ENCODE measurements at regions of chr12 and their contacts with region 1.

Region 1: GRCh38 chr12:54398995-54399793 is 14.7 kb upstream of the ZNF385A start:
- DNase-seq: peak; percentile 72
- H3K4me3 ChIP-seq: no peak overlapping the region
- H3K27ac ChIP-seq: no peak overlapping the region
- H3K4me1 ChIP-seq: peaks cover 6% of the 10 kb centered on the region
- H3K27me3 ChIP-seq: no peaks in the 10 kb centered on the region
- CTCF ChIP-seq: peak; percentile 100

Region 2: DNA sequence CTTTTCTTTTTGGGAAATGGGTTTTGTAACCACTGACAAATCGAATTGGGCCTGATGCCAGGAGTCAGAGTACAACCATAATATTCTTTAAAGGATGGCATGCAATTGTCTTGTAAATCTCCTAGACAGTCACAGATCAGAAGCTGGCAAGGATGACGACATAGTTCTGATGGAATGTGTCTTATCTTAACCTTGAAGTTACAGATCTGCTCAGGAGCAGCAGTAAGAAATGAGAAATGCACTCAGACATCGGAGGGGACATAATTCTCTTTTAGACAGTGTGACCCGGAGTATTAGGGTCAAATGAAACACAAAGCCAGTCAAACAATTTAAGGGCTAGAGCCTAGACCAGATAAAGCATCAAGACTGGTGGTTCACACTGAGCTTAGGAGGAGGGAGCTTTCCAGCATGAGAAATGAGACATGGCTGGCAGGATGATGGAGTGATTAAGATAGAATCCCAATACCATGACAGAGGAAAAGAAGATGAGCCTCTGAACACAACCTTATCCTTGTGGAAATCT is 136.7 kb before region 1 on chr12:
- CTCF ChIA-PET with region 1: no interaction called
- dilution Hi-C with region 1: no loop called
- in situ Hi-C with region 1: no loop called
- intact Hi-C with region 1: no loop called
- DNase-seq: no peak
- H3K4me3 ChIP-seq: no peak overlapping the region
- H3K27ac ChIP-seq: no peak overlapping the region
- H3K4me1 ChIP-seq: peaks cover 36% of the 10 kb centered on the region
- H3K27me3 ChIP-seq: no peaks in the 10 kb centered on the region
- CTCF ChIP-seq: no peak

Region 3: DNA sequence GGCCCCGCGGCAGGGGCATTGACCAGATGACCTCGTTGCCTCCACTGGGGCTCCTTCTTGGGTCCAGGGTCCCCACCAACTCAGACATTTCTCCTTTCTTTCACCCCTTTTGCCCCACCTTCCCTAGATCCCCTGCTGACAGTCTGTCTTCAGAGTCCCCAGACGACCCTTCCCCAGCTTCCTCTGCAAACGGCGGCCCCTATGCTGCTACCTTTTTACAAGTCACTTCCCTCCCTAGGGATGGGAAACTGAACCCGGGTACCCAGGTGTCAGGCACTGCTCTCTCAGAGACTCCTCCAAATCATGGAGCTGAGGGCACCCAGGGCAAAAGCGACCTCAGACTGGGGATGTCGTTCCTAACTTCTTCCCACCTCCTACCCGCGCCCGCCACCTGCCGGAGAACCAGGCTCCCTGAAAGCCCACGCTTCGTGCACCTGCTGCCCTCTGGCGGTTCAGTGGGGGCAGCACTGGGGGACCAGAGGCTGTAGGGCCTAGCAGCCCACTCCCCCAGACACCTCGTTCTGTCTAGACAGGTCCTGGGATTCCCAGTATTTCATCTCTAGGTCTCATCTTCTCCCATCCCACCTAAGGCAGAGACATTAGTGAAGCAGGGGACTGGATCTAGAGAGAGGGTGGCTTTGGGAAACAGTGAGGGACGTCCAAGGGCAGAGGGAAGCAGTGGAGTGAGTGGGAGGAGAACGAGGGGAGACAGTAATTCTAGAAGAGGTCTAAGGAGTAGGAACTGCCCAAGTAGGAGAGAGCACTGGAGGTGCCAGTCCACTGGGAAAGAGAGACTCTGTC is 19.6 kb before region 1 on chr12:
- CTCF ChIA-PET with region 1: interaction called, 4 read pairs
- dilution Hi-C with region 1: no loop called
- in situ Hi-C with region 1: no loop called
- intact Hi-C with region 1: loop called (anchors 1 kb)
- DNase-seq: peak; percentile 67
- H3K4me3 ChIP-seq: no peak overlapping the region
- H3K27ac ChIP-seq: no peak overlapping the region
- H3K4me1 ChIP-seq: peaks cover 39% of the 10 kb centered on the region
- H3K27me3 ChIP-seq: no peaks in the 10 kb centered on the region
- CTCF ChIP-seq: peak; percentile 100

Region 4: DNA sequence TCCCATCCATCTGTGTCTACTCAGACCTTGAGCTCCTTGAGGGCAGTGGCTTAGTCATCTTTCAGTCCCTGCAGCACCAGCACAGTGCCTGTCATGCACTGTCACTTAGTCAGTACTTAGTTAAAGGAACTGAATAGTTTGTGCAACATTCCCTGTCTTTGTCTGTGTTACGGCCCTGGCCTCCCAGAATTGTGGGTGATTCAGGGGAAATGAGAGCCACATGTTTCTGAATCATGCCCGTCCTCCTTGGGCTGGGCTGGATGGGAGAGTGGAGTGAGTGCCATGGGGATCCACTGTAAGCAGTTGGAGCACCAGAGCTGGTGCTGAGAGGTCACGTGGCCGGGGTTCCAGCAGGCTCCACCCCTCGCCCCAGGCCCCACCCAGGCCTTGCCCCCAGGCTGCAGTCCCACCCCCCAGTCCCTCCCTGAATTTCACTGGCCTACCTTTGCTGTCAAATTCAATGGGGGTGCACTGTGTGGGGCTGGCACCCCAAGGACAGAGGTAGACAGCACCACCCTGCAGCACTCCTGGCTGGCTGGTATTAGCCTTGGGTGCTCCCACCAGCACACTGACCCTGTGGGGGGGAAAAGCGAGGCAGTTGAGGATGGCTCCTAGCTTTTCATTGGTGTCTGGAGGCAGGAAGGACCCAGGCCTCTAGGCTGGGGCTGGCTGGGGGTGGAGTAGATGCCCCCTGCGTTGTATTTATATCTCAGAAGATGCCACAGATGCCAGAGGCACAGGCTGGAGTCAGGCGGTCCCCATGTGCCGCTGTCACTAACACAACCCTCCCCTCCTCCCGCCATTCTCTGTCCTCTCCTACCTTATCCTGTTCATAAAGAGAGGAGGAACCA is 12.4 kb after region 1 on chr12:
- CTCF ChIA-PET with region 1: interaction called, 12 read pairs
- dilution Hi-C with region 1: no loop called
- in situ Hi-C with region 1: no loop called
- intact Hi-C with region 1: no loop called
- DNase-seq: peak; percentile 99
- H3K4me3 ChIP-seq: no peak overlapping the region
- H3K27ac ChIP-seq: peak overlapping the region; percentile 74
- H3K4me1 ChIP-seq: peaks cover 46% of the 10 kb centered on the region
- H3K27me3 ChIP-seq: no peaks in the 10 kb centered on the region
- CTCF ChIP-seq: no peak

Region 5: GRCh38 chr12:54419088-54419892 is 20.1 kb after region 1 on chr12 and contains the start of gene ITGA5:
- CTCF ChIA-PET with region 1: interaction called, 4 read pairs
- dilution Hi-C with region 1: no loop called
- in situ Hi-C with region 1: no loop called
- intact Hi-C with region 1: loop called (anchors 1 kb)
- DNase-seq: peak; percentile 76
- H3K4me3 ChIP-seq: peak within 1 kb of the TSS; percentile 74 to 87 (median 82)
- H3K27ac ChIP-seq: peak within 1 kb of the TSS; percentile 66
- H3K4me1 ChIP-seq: peaks cover 56% of the 10 kb centered on the region
- H3K27me3 ChIP-seq: no peaks in the 10 kb centered on the region
- CTCF ChIP-seq: no peak
- total RNA-seq, gene ITGA5: 74.2 to 128 TPM

Region 6: GRCh38 chr12:54439521-54440255 is 40.5 kb after region 1 on chr12:
- CTCF ChIA-PET with region 1: interaction called, 27 read pairs
- dilution Hi-C with region 1: loop called (anchors 5 kb)
- in situ Hi-C with region 1: loop called (anchors 5 kb)
- intact Hi-C with region 1: loop called (anchors 1 kb)
- DNase-seq: peak; percentile 59
- H3K4me3 ChIP-seq: no peak overlapping the region
- H3K27ac ChIP-seq: no peak overlapping the region
- H3K4me1 ChIP-seq: peaks cover 17% of the 10 kb centered on the region
- H3K27me3 ChIP-seq: no peaks in the 10 kb centered on the region
- CTCF ChIP-seq: peak; percentile 78 to 83